Ovary (tissue), 10 donors: ENCODE measurements at regions of chr6 and their contacts with region 1.

Region 1: DNA sequence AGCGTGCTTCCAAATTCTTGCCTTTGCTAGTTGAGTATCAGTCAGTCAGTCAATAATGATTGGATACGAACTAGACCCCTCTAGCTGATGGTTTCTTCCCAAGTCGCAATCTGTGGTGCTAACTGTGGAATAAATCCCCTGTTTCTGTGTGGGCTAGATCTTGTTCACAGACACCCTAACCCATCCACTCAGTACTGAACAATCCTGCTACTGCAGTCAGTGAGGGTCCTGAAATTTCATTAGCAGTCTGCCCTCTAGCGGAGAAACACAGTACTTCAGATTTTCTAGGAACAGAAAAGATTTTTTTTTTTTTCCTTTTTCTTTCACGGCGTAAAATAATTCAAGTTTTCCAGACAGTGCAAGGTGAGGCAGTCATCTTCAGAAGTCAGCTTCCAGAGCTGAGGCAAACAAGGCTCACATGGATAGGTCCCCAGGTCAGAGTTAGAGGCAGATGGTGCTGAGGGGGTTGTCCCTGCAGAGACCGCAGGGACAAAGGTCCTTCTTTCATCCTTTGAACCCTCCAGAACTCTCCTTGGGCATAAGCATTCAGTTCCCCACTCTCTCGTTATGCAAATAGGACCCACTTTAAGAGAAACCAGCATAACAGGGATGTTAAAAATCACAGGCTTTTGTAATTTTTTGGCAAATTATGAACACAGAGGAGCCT is 119.6 kb downstream of the SCML4 start:
- DNase-seq: peak in 1 of 5 donors; percentile 51
- H3K4me3 ChIP-seq: no peak overlapping the region
- H3K27ac ChIP-seq: no peak overlapping the region
- H3K4me1 ChIP-seq: no peaks in the 10 kb centered on the region
- H3K27me3 ChIP-seq: no peaks in the 10 kb centered on the region
- CTCF ChIP-seq: peak; percentile 72 to 85 (median 78)
- EP300 ChIP-seq: no peak
- POLR2A ChIP-seq: no peak

Region 2: GRCh38 chr6:107185391-107185970 is 519.0 kb before region 1 on chr6:
- intact Hi-C with region 1: loop called in 1 of 4 experiments (anchors 10 kb)
- DNase-seq: peak in 4 of 5 donors; percentile 21 to 37 (median 30)
- H3K4me3 ChIP-seq: no peak overlapping the region
- H3K27ac ChIP-seq: no peak overlapping the region
- H3K4me1 ChIP-seq: no peaks in the 10 kb centered on the region
- H3K27me3 ChIP-seq: no peaks in the 10 kb centered on the region
- CTCF ChIP-seq: no peak
- EP300 ChIP-seq: no peak
- POLR2A ChIP-seq: no peak